Sciatic nerve (tissue), 2 donors: ENCODE measurements at regions of chr3 and their contacts with region 1.

Region 1: GRCh38 chr3:179421500-179421899 is 29.8 kb downstream of the GNB4 start:
- DNase-seq: no peak
- ATAC-seq: peak; percentile 56

Region 2: GRCh38 chr3:179432021-179432420 is 10.5 kb after region 1 on chr3:
- intact Hi-C with region 1: no loop called
- DNase-seq: no peak
- ATAC-seq: peak; percentile 71

Region 3: DNA sequence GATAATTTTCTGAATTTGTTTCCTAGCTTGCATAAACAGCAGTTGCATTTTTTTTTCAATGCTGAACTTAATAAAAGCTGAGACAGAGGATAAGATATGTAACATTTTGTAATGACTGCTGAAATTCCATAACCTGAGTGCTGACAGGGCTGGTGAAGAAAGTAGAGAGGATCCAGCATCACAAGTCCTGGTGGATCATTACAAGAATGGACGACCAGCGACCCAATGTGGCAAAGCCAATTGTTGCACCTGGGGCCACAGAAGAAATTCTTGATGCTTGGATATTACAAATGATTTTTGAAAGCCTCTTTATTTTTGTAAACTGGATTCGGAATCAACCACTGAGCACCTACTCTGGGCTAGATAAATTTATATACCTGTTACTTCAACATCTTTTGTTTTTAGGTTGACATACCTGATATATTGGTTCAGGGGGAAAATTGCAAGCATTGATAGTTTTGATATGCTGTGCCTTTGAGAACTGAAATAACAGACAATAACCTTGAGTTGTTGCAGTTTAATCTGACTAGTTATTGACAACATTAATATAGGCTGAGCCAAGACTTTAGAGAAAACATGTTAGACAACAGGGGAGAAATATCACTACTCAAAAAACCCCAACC is 137.4 kb after region 1 on chr3:
- intact Hi-C with region 1: loop called (anchors 5 kb)
- DNase-seq: peak; percentile 77
- ATAC-seq: no peak